Calu3 (cell line): ENCODE measurements at regions of chr22 and their contacts with region 1.

Region 1: GRCh38 chr22:44735540-44736488 is 16.6 kb upstream of the ARHGAP8 start:
- DNase-seq: peak; percentile 92
- H3K4me3 Mint-ChIP-seq: no peak overlapping the region
- H3K27ac Mint-ChIP-seq: peak overlapping the region; percentile 13
- H3K4me1 Mint-ChIP-seq: peaks cover 30% of the 10 kb centered on the region
- H3K27me3 Mint-ChIP-seq: no peaks in the 10 kb centered on the region
- CTCF ChIP-seq: peak; percentile 99

Region 2: GRCh38 chr22:44697423-44698141 is 38.2 kb before region 1 on chr22:
- CTCF ChIA-PET with region 1: no interaction called
- intact Hi-C with region 1: loop called (anchors 2 kb)
- DNase-seq: peak; percentile 92
- H3K4me3 Mint-ChIP-seq: no peak overlapping the region
- H3K27ac Mint-ChIP-seq: no peak overlapping the region
- H3K4me1 Mint-ChIP-seq: no peaks in the 10 kb centered on the region
- H3K27me3 Mint-ChIP-seq: peaks cover 14% of the 10 kb centered on the region
- CTCF ChIP-seq: peak; percentile 93